ENCODE measurements at regions of chr3 and their contacts with region 1.

Region 1: GRCh38 chr3:14548321-14548729 is 8.2 kb upstream of the GRIP2 start:
- DNase-seq: peak; percentile 79 to 88 (median 82)
- H3K4me3 ChIP-seq: no peak overlapping the region
- H3K27ac ChIP-seq: peak overlapping the region in 1 of 2 donors; percentile 39
- H3K4me1 ChIP-seq: peaks cover 6% of the 10 kb centered on the region
- H3K27me3 ChIP-seq: no peaks in the 10 kb centered on the region
- CTCF ChIP-seq: peak; percentile 73 to 89 (median 76)
- EP300 ChIP-seq: no peak
- POLR2A ChIP-seq: no peak

Region 2: DNA sequence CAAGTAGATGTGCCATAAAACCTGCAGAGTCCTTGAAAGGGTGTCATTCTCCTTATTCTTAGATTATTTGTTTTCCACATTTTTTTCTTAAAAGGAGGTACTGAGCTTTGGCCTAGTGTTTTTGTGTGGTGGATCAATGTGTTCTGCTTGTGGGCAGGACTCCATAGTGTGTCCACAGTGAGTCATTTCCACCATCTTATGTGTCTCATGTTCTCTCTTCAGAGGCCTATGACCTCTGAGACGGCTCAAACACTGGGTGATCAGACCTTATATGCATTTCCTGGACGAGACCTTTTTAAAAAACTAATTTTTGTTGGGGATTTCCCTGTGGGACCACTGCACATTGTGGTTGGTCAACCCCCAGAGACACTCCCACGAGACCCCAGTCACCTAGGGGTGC is 517.1 kb before region 1 on chr3:
- intact Hi-C with region 1: no loop called
- DNase-seq: no peak
- H3K4me3 ChIP-seq: no peak overlapping the region
- H3K27ac ChIP-seq: no peak overlapping the region
- H3K4me1 ChIP-seq: no peaks in the 10 kb centered on the region
- H3K27me3 ChIP-seq: no peaks in the 10 kb centered on the region
- CTCF ChIP-seq: no peak
- EP300 ChIP-seq: no peak
- POLR2A ChIP-seq: no peak

Region 3: GRCh38 chr3:14261229-14261628 is 287.1 kb before region 1 on chr3:
- intact Hi-C with region 1: loop called in 1 of 4 experiments (anchors 10 kb)
- DNase-seq: peak; percentile 82 to 90 (median 89)
- H3K4me3 ChIP-seq: no peak overlapping the region
- H3K27ac ChIP-seq: no peak overlapping the region
- H3K4me1 ChIP-seq: peaks cover 21% of the 10 kb centered on the region
- H3K27me3 ChIP-seq: no peaks in the 10 kb centered on the region
- CTCF ChIP-seq: peak; percentile 84 to 89 (median 85)
- EP300 ChIP-seq: no peak
- POLR2A ChIP-seq: no peak

Region 4: GRCh38 chr3:14426063-14426620 is 122.2 kb before region 1 on chr3:
- intact Hi-C with region 1: loop called in 1 of 4 experiments (anchors 10 kb)
- DNase-seq: no peak
- H3K4me3 ChIP-seq: no peak overlapping the region
- H3K27ac ChIP-seq: no peak overlapping the region
- H3K4me1 ChIP-seq: peaks cover 8% of the 10 kb centered on the region
- H3K27me3 ChIP-seq: no peaks in the 10 kb centered on the region
- CTCF ChIP-seq: no peak
- EP300 ChIP-seq: no peak
- POLR2A ChIP-seq: no peak

Region 5: GRCh38 chr3:14439579-14440518 is 108.5 kb before region 1 on chr3:
- intact Hi-C with region 1: no loop called
- DNase-seq: peak; percentile 72 to 84 (median 78)
- H3K4me3 ChIP-seq: no peak overlapping the region
- H3K27ac ChIP-seq: peak overlapping the region in 1 of 2 donors; percentile 29
- H3K4me1 ChIP-seq: peaks cover 31% of the 10 kb centered on the region
- H3K27me3 ChIP-seq: no peaks in the 10 kb centered on the region
- CTCF ChIP-seq: no peak
- EP300 ChIP-seq: no peak
- POLR2A ChIP-seq: no peak

Region 6: GRCh38 chr3:14508961-14509795 is 39.1 kb before region 1 on chr3:
- intact Hi-C with region 1: loop called in 2 of 4 experiments (anchors 2 to 5 kb)
- DNase-seq: peak; percentile 74 to 87 (median 84)
- H3K4me3 ChIP-seq: no peak overlapping the region
- H3K27ac ChIP-seq: peak overlapping the region in 1 of 2 donors; percentile 47
- H3K4me1 ChIP-seq: no peaks in the 10 kb centered on the region
- H3K27me3 ChIP-seq: no peaks in the 10 kb centered on the region
- CTCF ChIP-seq: peak; percentile 78 to 91 (median 83)
- EP300 ChIP-seq: no peak
- POLR2A ChIP-seq: no peak